Psoas muscle (tissue), 8 donors: ENCODE measurements at regions of chr9 and their contacts with region 1.

Region 1: DNA sequence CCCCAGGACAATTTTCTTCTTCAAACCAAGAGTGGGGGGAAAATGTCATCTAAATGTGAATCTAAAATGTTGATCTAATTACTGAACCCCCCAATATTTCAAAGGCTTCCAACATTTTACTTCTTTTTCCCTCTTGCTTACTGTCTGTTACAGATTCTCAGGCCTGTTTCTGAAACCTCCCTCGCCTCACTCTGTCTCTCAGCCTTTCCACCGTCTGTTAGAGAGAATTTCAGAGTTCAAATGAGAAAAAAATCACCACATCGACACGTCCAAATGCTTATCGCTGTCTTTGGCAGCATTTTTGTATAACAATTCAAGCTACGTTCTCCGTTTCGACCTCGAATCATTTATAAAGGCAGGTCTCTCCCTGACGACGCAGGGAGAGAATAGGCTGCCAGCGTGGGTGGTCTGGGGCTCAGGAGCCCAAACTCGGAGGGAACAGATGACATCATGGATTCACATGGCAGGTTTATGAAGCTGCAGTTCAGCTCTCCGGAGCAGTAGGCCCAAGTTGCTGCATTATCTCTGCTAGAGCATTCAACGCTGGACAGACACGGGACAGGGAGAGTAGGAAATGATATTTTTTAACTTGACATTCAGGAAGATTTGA is 139.8 kb downstream of the GAS1 start:
- DNase-seq: no peak
- ATAC-seq: no peak
- H3K4me3 ChIP-seq: no peak overlapping the region
- H3K27ac ChIP-seq: no peak overlapping the region
- H3K4me1 ChIP-seq: no peaks in the 10 kb centered on the region
- H3K27me3 ChIP-seq: no peaks in the 10 kb centered on the region
- CTCF ChIP-seq: no peak

Region 2: GRCh38 chr9:86731511-86731993 is 75.9 kb before region 1 on chr9:
- intact Hi-C with region 1: no loop called
- DNase-seq: no peak
- ATAC-seq: peak in 2 of 4 donors; percentile 51 to 59
- H3K4me3 ChIP-seq: no peak overlapping the region
- H3K27ac ChIP-seq: peak overlapping the region; percentile 46
- H3K4me1 ChIP-seq: no peaks in the 10 kb centered on the region
- H3K27me3 ChIP-seq: no peaks in the 10 kb centered on the region
- CTCF ChIP-seq: no peak

Region 3: DNA sequence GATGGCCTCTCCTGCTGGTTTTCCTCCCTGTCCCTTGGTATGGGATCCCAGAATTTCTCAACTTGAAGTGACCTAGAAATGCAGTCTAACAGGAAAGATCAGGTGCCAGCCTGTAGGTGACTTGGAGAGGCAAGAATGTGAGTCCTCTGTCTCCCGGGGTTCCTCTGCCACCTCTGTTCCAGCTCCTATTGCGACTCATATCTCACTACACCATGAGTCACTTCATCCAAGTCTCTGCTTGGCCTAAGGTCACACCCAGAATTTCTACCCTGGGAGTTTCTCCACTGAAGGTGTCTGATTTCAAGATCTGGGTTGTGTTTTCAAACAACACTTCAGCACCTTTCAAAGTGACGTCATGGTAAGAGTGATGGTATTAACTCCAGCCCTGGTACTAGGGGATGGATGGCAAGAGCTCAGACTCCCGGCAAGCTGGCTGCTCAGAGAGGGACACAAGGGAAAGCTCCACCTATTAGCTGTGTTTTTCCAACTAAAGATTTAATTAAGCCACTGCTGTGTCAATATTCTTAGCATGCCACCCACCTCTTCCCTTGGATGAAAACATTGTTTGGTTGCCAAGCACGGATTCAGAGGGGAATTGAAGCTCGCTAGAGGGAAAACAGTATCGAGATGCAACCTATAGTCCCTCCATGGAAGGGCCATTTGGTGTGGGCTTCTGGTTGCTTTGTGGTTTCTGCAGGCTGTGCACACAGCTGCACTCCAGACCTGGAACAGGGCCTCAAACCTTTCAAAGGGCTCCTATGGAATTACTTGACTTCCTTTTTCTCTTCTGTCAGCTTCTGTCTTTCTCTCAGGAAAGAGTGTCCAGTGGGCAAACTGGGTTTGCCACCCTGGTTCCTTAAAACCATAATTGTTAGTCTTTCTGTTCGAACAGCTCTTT is 65.9 kb before region 1 on chr9:
- intact Hi-C with region 1: loop called in 1 of 2 experiments (anchors 10 kb)
- DNase-seq: no peak
- ATAC-seq: peak in 3 of 4 donors; percentile 30 to 59 (median 50)
- H3K4me3 ChIP-seq: no peak overlapping the region
- H3K27ac ChIP-seq: no peak overlapping the region
- H3K4me1 ChIP-seq: no peaks in the 10 kb centered on the region
- H3K27me3 ChIP-seq: no peaks in the 10 kb centered on the region
- CTCF ChIP-seq: no peak

Region 4: GRCh38 chr9:86795823-86796553 is 11.5 kb before region 1 on chr9:
- intact Hi-C with region 1: loop called in 1 of 2 experiments (anchors 1 kb)
- DNase-seq: peak; percentile 55 to 73
- ATAC-seq: peak; percentile 28 to 86 (median 60)
- H3K4me3 ChIP-seq: peak overlapping the region; percentile 23
- H3K27ac ChIP-seq: no peak overlapping the region
- H3K4me1 ChIP-seq: no peaks in the 10 kb centered on the region
- H3K27me3 ChIP-seq: no peaks in the 10 kb centered on the region
- CTCF ChIP-seq: no peak